ENCODE measurements at regions of chr2 and their contacts with region 1.

Region 1: GRCh38 chr2:237858294-237859081 is 935 bp upstream of the RAMP1 start:
- DNase-seq: peak in 1 of 2 donors; percentile 90
- H3K4me3 ChIP-seq: peak overlapping the region; percentile 57 to 68
- H3K27ac ChIP-seq: peak overlapping the region; percentile 87
- H3K4me1 ChIP-seq: peaks cover 23% of the 10 kb centered on the region
- H3K27me3 ChIP-seq: no peaks in the 10 kb centered on the region
- CTCF ChIP-seq: peak; percentile 67 to 75 (median 73)
- POLR2A ChIP-seq: no peak

Region 2: GRCh38 chr2:237923481-237924163 is 65.1 kb after region 1 on chr2:
- intact Hi-C with region 1: loop called (anchors 2 kb)
- DNase-seq: no peak
- H3K4me3 ChIP-seq: peak overlapping the region in 1 of 2 donors; percentile 19
- H3K27ac ChIP-seq: peak overlapping the region; percentile 56
- H3K4me1 ChIP-seq: peaks cover 12% of the 10 kb centered on the region
- H3K27me3 ChIP-seq: no peaks in the 10 kb centered on the region
- CTCF ChIP-seq: peak; percentile 76 to 96 (median 95)
- POLR2A ChIP-seq: no peak

Region 3: DNA sequence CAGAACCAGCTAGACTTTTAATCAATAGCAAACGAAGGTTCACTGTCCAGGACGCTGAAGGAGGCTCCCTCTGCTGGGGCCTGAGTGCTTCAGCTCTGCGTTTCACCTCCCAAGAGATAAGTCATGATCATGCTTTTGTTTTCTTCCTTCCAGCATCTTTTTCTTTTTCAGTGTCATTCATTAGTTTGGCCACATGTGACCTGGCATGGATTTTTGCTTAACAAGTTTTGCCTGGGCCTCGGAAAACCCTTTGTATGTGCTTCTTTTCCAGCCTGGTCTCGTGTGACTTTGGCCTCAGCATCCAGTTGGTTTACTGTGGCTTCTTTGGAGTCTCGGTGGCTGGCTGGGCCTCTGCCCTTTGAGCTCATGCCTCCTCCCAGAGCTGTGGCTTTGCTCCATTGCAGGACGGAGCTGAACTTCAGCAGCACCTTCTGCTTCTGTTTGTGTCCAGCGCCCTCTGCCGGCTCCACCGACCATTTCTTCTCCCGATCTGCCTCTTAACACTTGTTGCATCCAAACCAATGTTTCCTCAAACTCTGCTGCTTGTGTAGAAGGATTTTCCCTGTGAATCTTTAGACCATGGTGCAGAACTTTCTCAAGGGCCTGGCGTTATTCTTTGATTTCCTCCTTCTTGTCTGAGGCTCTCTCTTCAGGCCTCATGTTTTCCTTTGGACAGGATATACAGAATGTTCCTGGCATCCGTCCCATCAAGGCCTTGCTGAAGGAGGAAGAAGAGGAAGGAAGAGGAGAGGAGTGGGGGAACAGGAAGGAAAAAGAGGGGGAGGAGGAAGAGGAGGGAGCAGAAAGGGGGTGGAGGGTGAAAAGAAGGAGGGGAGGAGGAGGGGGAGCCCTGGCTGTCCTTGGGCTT is 404.9 kb after region 1 on chr2:
- intact Hi-C with region 1: loop called (anchors 1 kb)
- DNase-seq: no peak
- H3K4me3 ChIP-seq: no peak overlapping the region
- H3K27ac ChIP-seq: peak overlapping the region; percentile 78
- H3K4me1 ChIP-seq: peaks cover 26% of the 10 kb centered on the region
- H3K27me3 ChIP-seq: no peaks in the 10 kb centered on the region
- CTCF ChIP-seq: peak; percentile 52 to 87 (median 60)
- POLR2A ChIP-seq: no peak